Mammary epithelial cell (primary cell): ENCODE measurements at regions of chr19 and their contacts with region 1.

Region 1: GRCh38 chr19:29873024-29873800 is 61.4 kb downstream of the CCNE1 start:
- DNase-seq: no peak
- H3K4me3 ChIP-seq: peak overlapping the region; percentile 28 to 46 (median 33)
- H3K27ac ChIP-seq: no peak overlapping the region
- H3K4me1 ChIP-seq: peaks cover 11% of the 10 kb centered on the region
- H3K27me3 ChIP-seq: no peaks in the 10 kb centered on the region
- CTCF ChIP-seq: peak; percentile 33 to 66

Region 2: GRCh38 chr19:29779921-29780320 is 93.3 kb before region 1 on chr19:
- CTCF ChIA-PET with region 1: no interaction called
- dilution Hi-C with region 1: no loop called
- in situ Hi-C with region 1: no loop called
- intact Hi-C with region 1: no loop called
- DNase-seq: no peak
- H3K4me3 ChIP-seq: no peak overlapping the region
- H3K27ac ChIP-seq: no peak overlapping the region
- H3K4me1 ChIP-seq: no peaks in the 10 kb centered on the region
- H3K27me3 ChIP-seq: no peaks in the 10 kb centered on the region
- CTCF ChIP-seq: peak in 1 of 2 donors; percentile 2

Region 3: DNA sequence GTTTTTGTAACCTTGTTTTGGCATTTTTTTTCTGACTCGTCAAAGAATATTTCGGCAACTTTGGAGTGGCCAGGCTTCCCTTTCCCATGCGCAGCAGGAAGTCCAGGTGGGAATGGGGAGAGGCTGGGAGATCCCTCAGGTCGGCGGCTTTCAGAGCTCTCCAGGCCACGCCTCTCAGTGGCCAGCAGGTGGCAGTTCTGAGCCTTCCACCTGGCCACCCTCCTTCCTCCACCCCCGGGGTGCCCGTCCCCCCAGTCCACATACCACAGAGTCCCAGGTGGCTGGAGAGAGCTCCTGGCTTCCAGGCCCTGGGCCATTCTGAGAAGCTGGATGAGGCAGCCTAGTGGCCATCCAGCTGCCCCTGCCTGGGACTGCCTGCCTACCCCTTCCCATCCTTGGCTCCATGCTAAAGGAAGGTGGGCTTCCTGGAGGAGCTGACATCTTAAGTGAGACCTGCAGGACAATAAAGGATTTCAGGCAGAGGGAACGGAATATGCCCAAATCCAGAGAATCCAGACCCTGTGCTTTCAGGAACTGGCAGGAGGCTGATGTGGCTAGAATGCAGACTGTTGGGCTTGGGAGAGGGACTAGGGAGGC is 15.1 kb before region 1 on chr19:
- CTCF ChIA-PET with region 1: interaction called, 6 read pairs
- dilution Hi-C with region 1: no loop called
- in situ Hi-C with region 1: no loop called
- intact Hi-C with region 1: loop called (anchors 1 kb)
- DNase-seq: no peak
- H3K4me3 ChIP-seq: no peak overlapping the region
- H3K27ac ChIP-seq: no peak overlapping the region
- H3K4me1 ChIP-seq: no peaks in the 10 kb centered on the region
- H3K27me3 ChIP-seq: no peaks in the 10 kb centered on the region
- CTCF ChIP-seq: peak; percentile 59 to 83